Vagina (tissue), 2 donors: ENCODE measurements at regions of chrX and their contacts with region 1.

Region 1: DNA sequence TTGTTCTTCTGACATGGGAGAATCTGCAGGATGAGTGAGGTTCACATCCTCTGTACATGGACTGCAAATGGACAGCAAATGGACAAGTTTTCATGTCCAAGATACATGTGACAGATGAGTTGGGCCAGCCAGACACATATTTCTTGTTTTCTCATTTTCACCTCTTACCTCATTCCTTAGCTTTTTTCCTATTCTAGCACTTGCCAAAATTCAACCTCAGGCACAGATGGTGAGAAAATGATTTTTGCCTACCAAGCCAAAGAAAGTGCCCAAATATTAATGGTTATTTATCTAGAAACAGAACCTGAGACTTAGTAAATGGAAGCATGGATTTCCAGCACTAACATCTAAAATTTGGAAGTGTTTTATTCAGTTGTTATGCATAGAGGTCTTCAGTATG is 402.2 kb downstream of the AFF2 start:
- DNase-seq: no peak
- H3K4me3 ChIP-seq: no peak overlapping the region
- H3K27ac ChIP-seq: no peak overlapping the region
- H3K4me1 ChIP-seq: no peaks in the 10 kb centered on the region
- H3K27me3 ChIP-seq: no peaks in the 10 kb centered on the region
- CTCF ChIP-seq: no peak
- POLR2A ChIP-seq: no peak

Region 2: DNA sequence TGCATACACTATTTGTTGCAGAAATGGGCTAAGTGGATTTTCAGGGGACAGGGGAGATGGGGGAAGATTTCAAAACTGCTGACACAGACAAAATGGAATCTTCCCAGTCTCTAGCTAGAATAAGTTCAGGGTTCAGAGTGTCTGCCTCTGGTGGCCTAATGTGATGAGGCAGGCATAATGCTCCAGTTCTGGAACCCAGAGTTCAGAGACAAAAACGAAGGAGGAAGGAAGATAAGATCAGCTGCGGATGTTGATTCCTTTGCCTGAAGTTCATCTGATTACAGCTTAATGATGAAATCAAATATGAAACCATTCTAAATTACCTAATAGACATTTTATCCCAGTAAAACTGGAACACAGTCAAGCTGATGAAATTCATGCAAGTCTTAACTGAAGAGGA is 44.9 kb after region 1 on chrX:
- intact Hi-C with region 1: no loop called
- DNase-seq: no peak
- H3K4me3 ChIP-seq: no peak overlapping the region
- H3K27ac ChIP-seq: no peak overlapping the region
- H3K4me1 ChIP-seq: no peaks in the 10 kb centered on the region
- H3K27me3 ChIP-seq: no peaks in the 10 kb centered on the region
- CTCF ChIP-seq: no peak
- POLR2A ChIP-seq: no peak

Region 3: DNA sequence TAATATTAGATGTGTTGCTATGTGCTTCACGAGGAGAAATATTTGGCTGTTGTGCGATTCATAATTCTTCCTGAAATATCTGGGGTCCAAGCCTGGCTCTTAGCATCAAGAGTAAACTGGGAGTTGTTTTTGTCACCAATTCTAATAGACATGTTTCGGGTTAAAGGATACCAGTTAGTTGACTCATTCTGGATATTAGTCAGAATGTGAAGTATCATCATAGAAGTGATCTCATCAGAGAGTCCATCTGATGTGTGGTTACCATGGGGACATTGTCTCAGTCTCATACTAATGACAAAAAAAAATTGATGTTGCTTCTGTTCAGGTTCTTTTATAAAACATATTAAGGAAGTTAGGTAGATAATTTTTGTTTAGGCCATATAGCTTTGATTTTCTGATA is 1733.4 kb after region 1 on chrX:
- intact Hi-C with region 1: loop called (anchors 5 kb)
- DNase-seq: no peak
- H3K4me3 ChIP-seq: no peak overlapping the region
- H3K27ac ChIP-seq: no peak overlapping the region
- H3K4me1 ChIP-seq: no peaks in the 10 kb centered on the region
- H3K27me3 ChIP-seq: no peaks in the 10 kb centered on the region
- CTCF ChIP-seq: no peak
- POLR2A ChIP-seq: no peak